ENCODE measurements at regions of chr11 and their contacts with region 1.

Region 1: GRCh38 chr11:133134314-133135173 is 397.8 kb downstream of the OPCML start:
- DNase-seq: no peak
- H3K4me3 ChIP-seq: no peak overlapping the region
- H3K27ac ChIP-seq: no peak overlapping the region
- H3K27me3 ChIP-seq: no peaks in the 10 kb centered on the region
- CTCF ChIP-seq: peak; percentile 72

Region 2: DNA sequence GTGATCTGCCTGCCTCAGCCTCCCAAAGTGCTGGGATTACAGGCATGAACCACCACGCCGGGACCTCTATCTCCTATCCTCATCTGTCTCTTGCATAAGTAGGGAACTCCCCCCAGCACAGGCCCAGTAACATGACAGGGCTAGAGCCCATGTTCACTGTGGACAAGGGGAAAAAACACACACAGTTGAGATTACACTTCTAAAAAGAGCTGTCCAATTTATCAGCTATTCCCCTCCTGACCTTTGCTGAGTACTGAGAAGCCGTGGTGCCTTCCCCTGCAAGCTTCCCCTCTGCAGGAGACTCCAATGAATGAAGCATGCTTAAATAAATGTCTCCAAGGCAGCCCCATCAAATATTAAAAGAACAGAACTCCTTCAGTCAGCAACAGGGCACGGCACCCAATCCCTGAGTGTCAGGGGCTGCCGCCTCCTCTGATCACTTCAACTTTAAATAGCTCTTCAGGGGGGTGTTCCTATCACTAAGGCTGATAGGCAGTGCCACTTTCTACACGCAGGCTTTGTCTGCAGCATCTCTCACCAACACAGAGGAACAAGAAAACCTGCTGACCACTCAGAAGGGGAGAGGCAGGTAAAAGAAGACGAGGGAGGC is 12.3 kb after region 1 on chr11:
- CTCF ChIA-PET with region 1: interaction called, 10 read pairs
- POLR2A ChIA-PET with region 1: no interaction called
- DNase-seq: no peak
- H3K4me3 ChIP-seq: no peak overlapping the region
- H3K27ac ChIP-seq: no peak overlapping the region
- H3K27me3 ChIP-seq: no peaks in the 10 kb centered on the region
- CTCF ChIP-seq: no peak